GM12878 (cell line): ENCODE measurements at regions of chr16 and their contacts with region 1.

Region 1: DNA sequence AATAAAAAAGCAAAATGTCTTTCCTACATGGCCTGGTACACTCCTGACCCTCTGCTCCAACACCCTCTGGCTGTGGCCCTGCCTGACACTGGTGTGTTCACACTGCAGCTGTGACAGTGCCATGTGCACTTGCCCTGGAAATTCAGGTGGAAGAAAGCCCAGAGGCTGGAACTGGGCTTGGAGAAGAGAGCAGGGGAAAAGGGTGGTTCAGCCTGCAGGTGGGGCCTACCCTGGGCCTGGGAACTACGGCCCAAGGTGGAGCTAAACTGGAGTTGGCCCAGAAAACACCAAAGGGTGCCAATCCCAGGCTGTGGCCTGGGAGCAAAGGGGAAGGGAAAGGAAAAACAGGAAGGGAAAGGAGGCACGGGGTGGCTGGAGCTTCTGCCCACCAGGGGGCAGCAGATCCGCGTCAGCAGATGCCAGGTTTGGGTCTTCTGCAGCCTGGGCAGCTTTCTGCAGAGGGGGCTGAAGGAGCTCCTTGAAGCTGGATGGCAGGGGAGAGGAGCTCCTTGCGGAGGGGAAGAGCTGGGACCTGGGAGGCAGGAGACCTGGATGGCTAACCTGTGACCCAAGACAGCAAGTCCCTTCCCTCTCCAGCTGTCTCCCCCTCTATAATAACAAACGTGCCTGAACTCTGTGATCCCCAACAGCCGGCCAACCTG is 15.4 kb upstream of the CTCF start:
- DNase-seq: no peak
- ATAC-seq: peak; percentile 74
- H3K4me3 ChIP-seq: no peak overlapping the region
- H3K27ac ChIP-seq: peak overlapping the region; percentile 87
- H3K4me1 ChIP-seq: peaks cover 28% of the 10 kb centered on the region
- H3K27me3 ChIP-seq: no peaks in the 10 kb centered on the region
- CTCF ChIP-seq: peak; percentile 98 to 99 (median 98); a peak in 5 of 6 replicates
- EP300 ChIP-seq: no peak
- POLR2A ChIP-seq: peak; percentile 18; the same call in 1 of the 2 replicates
- RAD21 ChIP-seq: peak; percentile 92

Region 2: DNA sequence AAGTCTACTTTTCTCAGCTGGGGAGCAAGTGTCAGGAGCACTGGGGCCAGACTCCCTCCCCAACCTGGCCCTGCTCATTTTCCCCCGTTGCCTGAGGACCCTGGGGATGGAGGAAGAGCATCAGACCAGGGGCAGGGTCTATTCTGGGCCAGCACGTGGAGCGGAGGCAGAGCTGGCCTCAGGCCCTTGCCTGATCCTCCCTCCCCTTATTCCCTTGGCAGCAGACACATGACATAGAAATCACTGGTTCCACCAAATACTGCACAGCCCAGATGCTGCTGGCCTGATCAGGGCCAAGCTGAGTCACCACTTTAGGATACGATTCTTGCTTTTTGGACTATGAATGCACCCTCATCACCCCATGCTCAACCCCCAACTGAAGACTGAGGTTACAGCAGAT is 47.8 kb before region 1 on chr16:
- CTCF ChIA-PET with region 1: interaction called, 10 read pairs
- POLR2A ChIA-PET with region 1: no interaction called
- RAD21 ChIA-PET with region 1: no interaction called
- SMC1A ChIA-PET with region 1: interaction called, 3 read pairs
- in situ Hi-C with region 1: no loop called
- intact Hi-C with region 1: no loop called
- DNase-seq: no peak
- ATAC-seq: no peak
- H3K4me3 ChIP-seq: no peak overlapping the region
- H3K27ac ChIP-seq: no peak overlapping the region
- H3K4me1 ChIP-seq: no peaks in the 10 kb centered on the region
- H3K27me3 ChIP-seq: no peaks in the 10 kb centered on the region
- CTCF ChIP-seq: no peak
- EP300 ChIP-seq: no peak
- POLR2A ChIP-seq: no peak
- RAD21 ChIP-seq: no peak

Region 3: DNA sequence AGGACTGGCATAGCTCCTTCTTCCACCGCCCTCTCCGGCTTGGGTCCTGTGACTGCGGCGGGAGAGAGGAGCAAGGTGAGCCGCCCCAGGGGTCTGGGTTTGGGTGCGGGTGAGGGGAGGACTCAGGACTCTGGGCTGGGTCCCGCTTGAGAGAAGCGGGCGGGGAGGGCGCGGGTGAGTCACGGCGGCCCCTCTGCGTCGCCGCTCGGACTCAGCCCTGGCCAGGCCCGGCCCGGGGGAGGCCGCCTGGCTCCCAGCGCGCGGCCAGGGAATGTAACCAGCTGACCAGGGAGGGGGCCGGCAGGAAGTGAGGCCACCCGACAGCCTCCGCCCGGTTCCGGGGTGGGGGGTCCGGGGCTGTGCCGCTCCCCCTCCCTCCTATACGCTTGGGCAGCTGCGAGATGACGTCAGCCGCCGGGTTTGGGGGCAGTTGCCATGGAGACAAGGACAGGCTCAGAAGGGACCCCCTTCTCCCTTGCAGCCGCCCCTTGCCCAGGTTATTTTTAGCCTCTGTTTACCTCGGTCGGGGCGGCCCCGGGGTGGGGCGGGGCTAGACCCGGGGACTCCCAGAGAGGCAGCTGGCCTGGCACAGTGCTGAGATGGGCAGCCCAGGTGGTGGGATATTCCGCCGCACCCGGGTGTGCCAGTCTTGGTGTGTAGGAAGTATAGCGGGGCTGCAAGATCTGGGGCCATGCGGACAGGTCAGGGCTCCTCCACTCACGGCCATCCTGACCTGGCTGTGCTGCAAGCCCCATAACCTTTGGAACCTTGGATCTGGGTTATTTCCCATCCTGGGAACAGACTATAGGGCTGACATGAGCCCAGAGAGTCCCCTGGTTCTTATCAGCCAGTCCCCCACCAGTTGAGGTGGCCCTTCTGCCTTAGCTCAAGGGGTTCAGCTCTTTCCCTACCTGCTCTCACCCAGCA is 16.6 kb before region 1 on chr16:
- CTCF ChIA-PET with region 1: interaction called, 31 read pairs
- POLR2A ChIA-PET with region 1: interaction called, 8 read pairs
- RAD21 ChIA-PET with region 1: interaction called, 8 read pairs
- SMC1A ChIA-PET with region 1: interaction called, 7 read pairs
- in situ Hi-C with region 1: no loop called
- intact Hi-C with region 1: no loop called
- DNase-seq: no peak
- ATAC-seq: peak; percentile 66
- H3K4me3 ChIP-seq: peak overlapping the region; percentile 90; the same call in 1 of the 2 replicates
- H3K27ac ChIP-seq: peak overlapping the region; percentile 22; the same call in 1 of the 2 replicates
- H3K4me1 ChIP-seq: peaks cover 34% of the 10 kb centered on the region
- H3K27me3 ChIP-seq: no peaks in the 10 kb centered on the region
- CTCF ChIP-seq: no peak
- EP300 ChIP-seq: 0 out of 4 replicates have a peak, but pooled peaks of 1 of the 2 experiments have one; percentile 5
- POLR2A ChIP-seq: peak; percentile 57
- RAD21 ChIP-seq: no peak

Region 4: DNA sequence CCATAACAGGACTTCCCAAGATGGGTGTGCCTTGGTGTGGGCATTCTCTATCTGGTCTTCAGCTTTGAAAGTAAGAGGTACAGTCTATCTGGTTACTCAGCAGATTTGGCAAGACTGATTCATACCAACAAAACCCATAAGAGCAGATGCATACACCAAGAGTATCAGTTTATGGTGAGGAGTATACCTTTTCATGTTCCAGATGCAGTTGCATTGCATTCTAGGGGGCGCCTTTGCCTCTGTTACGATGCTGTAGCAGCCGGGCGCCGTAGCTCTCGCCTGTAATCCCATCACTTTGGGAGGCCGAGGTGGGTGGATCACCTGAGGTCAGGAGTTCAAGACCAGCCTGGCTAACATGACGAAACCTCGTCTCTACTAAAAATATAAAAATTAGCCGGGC is 66.9 kb after region 1 on chr16:
- CTCF ChIA-PET with region 1: interaction called, 13 read pairs
- POLR2A ChIA-PET with region 1: no interaction called
- RAD21 ChIA-PET with region 1: interaction called, 3 read pairs
- SMC1A ChIA-PET with region 1: interaction called, 6 read pairs
- in situ Hi-C with region 1: no loop called
- intact Hi-C with region 1: no loop called
- DNase-seq: no peak
- ATAC-seq: no peak
- H3K4me3 ChIP-seq: no peak overlapping the region
- H3K27ac ChIP-seq: no peak overlapping the region
- H3K4me1 ChIP-seq: no peaks in the 10 kb centered on the region
- H3K27me3 ChIP-seq: no peaks in the 10 kb centered on the region
- CTCF ChIP-seq: peak in 1 of 3 experiments; percentile 15; a peak in 1 of 6 replicates
- EP300 ChIP-seq: no peak
- POLR2A ChIP-seq: no peak
- RAD21 ChIP-seq: no peak

Region 5: GRCh38 chr16:67667817-67668494 is 121.1 kb after region 1 on chr16:
- CTCF ChIA-PET with region 1: interaction called, 49 read pairs
- POLR2A ChIA-PET with region 1: no interaction called
- RAD21 ChIA-PET with region 1: interaction called, 22 read pairs
- SMC1A ChIA-PET with region 1: interaction called, 19 read pairs
- in situ Hi-C with region 1: no loop called
- intact Hi-C with region 1: loop called (anchors 1 kb)
- DNase-seq: peak; percentile 70
- ATAC-seq: peak; percentile 88
- H3K4me3 ChIP-seq: no peak overlapping the region
- H3K27ac ChIP-seq: no peak overlapping the region
- H3K4me1 ChIP-seq: peaks cover 34% of the 10 kb centered on the region
- H3K27me3 ChIP-seq: no peaks in the 10 kb centered on the region
- CTCF ChIP-seq: peak; percentile 91 to 94 (median 92)
- EP300 ChIP-seq: no peak
- POLR2A ChIP-seq: no peak
- RAD21 ChIP-seq: peak; percentile 67